PC-9 (cell line): ENCODE measurements at regions of chr1 and their contacts with region 1.

Region 1: GRCh38 chr1:93964777-93965200 is 55.6 kb upstream of the GCLM start:
- DNase-seq: peak; percentile 90 to 100
- H3K4me3 ChIP-seq: peak overlapping the region; percentile 43
- H3K27ac ChIP-seq: peak overlapping the region; percentile 99
- H3K4me1 ChIP-seq: peaks cover 99% of the 10 kb centered on the region
- H3K27me3 ChIP-seq: no peaks in the 10 kb centered on the region
- CTCF ChIP-seq: no peak

Region 2: GRCh38 chr1:93123201-93123783 is 841.5 kb before region 1 on chr1:
- CTCF ChIA-PET with region 1: no interaction called
- POLR2A ChIA-PET with region 1: no interaction called
- intact Hi-C with region 1: no loop called
- DNase-seq: no peak
- H3K4me3 ChIP-seq: no peak overlapping the region
- H3K27ac ChIP-seq: no peak overlapping the region
- H3K4me1 ChIP-seq: no peaks in the 10 kb centered on the region
- H3K27me3 ChIP-seq: no peaks in the 10 kb centered on the region
- CTCF ChIP-seq: no peak

Region 3: DNA sequence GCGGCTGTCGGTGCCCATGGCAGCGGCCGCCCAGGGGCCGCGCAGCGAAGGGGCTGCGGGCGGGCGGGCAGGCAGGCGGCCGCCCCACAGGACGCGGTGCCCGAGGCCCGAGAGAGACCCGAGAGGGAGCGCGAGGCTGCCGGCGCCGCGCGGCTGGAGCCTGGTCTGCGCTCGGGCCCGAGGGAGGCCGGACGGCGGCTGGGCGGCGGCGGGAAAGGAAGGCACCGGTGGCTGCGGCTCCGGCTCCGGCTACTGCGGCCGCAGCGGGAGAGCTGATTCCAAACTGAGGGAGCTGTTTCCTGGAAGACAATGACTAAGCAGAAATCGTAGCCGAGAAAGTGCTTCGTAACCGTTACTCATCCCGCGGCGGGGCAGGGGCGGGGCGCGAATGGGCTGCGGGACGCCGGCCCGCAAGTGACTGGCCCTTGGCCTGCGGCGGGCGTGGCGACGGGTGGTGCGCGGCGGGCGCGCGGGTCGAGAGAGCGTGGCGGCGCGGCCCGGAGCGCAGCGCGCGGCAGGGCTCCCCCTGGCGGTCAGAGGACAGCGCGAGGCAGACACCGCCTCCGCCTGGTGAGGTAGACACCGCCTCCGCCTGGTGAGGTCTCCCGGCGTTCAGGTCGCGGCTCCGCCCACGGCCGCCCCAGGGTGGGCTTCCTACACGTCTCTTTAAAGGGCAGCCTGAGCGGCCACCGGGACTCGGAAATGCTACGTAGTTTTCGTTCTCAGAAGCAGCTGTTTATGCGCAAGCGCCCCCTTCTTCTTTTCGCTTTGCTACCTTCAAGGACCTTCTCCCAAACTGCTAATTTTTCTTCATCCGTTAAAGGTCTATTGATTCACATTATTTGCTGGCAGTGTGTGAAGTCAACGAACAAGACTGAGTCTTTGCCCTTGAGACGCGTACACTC is 55.4 kb before region 1 on chr1 and contains the start of gene GCLM:
- CTCF ChIA-PET with region 1: interaction called, 4 read pairs
- POLR2A ChIA-PET with region 1: interaction called, 16 read pairs
- intact Hi-C with region 1: loop called (anchors 1 kb)
- DNase-seq: peak; percentile 94 to 97
- H3K4me3 ChIP-seq: peak within 1 kb of the TSS; percentile 68
- H3K27ac ChIP-seq: peak within 1 kb of the TSS; percentile 80
- H3K4me1 ChIP-seq: peaks cover 32% of the 10 kb centered on the region
- H3K27me3 ChIP-seq: no peaks in the 10 kb centered on the region
- CTCF ChIP-seq: peak; percentile 80
- total RNA-seq, gene GCLM: 270 and 272 TPM in 2 replicates

Region 4: DNA sequence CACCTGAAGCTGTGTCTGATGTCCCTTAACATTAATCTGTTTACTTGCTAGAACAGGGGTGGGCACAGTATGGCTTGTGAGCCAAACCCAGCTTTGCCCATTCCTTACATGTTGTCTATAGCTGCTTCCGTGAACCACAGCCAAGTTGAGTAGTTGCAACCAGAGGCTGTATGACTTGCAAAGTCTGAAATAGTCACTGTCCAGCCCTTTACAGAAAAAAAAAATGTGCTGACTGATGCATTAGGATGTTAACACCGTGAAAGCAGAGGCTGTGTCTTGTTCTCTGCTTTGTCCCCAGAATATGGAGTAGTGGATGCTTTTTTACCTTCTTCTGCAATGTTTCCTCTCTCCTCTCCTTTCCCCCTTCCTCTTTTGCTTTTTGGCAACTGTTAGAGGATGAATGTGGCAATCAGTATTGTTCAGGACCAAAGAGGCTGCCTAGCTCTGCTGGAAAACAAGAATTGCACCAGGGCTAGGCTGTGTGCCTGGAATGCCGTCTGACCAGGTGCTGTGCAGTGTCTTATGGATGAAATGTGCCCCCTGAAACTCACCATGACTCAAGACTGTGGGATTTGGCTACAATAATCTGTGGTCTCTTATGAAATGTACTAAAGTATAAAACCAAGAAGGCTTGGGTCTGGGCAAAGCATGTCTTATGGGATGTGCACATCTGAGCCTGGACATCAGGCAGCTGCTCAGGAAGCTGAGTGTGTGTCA is 24.0 kb after region 1 on chr1:
- CTCF ChIA-PET with region 1: interaction called, 11 read pairs
- POLR2A ChIA-PET with region 1: interaction called, 14 read pairs
- intact Hi-C with region 1: loop called (anchors 1 kb)
- DNase-seq: peak; percentile 84 to 100
- H3K4me3 ChIP-seq: peak overlapping the region; percentile 25; the same call in 1 of the 2 replicates
- H3K27ac ChIP-seq: peak overlapping the region; percentile 95
- H3K4me1 ChIP-seq: peaks cover 61% of the 10 kb centered on the region
- H3K27me3 ChIP-seq: no peaks in the 10 kb centered on the region
- CTCF ChIP-seq: no peak

Region 5: GRCh38 chr1:94045465-94046056 is 80.8 kb after region 1 on chr1:
- CTCF ChIA-PET with region 1: interaction called, 4 read pairs
- POLR2A ChIA-PET with region 1: interaction called, 15 read pairs
- intact Hi-C with region 1: no loop called
- DNase-seq: peak; percentile 92 to 97
- H3K4me3 ChIP-seq: no peak overlapping the region
- H3K27ac ChIP-seq: peak overlapping the region; percentile 28
- H3K4me1 ChIP-seq: peaks cover 30% of the 10 kb centered on the region
- H3K27me3 ChIP-seq: no peaks in the 10 kb centered on the region
- CTCF ChIP-seq: peak; percentile 90

Region 6: DNA sequence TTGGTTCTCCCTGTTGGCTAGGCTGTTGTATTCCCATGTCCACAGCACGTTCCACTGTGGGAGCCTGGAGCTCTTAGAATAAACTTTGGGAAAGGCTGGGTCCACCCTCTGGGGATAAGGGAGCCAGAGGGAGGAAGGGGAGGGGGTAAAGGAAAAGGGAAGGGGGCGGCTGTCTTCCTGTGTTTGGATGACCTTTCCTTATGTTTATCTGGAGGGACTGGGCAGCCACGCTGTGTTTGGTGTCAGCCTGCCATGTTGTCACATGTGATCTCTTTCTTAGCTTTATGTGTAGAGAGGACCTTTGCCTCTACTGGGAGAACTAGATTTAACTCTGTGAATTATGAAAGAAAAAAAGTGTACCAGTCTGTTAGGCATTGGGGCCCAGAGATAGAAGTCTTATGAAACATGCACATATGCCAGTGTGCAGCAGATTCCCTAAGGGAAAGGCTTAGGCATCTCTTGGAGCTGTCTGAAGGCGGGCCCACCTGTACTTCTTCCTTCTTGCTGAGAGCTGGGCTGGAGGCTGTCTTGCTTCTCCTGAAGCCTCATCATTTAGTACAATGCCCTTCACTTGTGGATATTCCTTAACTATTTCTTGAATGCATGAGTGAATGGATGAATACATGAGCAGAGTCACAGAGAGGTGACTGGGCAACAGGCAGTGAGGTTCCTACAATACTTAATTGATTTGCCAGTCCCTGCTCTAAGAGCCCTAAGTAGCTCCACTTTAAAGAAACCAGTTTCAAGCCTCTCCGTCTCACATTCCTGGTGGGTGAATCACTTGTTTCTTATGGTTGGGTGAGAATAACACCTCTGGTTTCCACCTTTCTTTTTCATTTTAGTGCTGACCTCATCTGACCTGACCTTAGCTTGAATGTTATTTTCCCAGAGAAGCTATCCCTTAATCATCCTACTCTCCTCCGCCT is 335.1 kb after region 1 on chr1:
- CTCF ChIA-PET with region 1: no interaction called
- POLR2A ChIA-PET with region 1: interaction called, 10 read pairs
- intact Hi-C with region 1: no loop called
- DNase-seq: peak; percentile 71 to 100
- H3K4me3 ChIP-seq: peak overlapping the region; percentile 3; the same call in 1 of the 2 replicates
- H3K27ac ChIP-seq: peak overlapping the region; percentile 97
- H3K4me1 ChIP-seq: peaks cover 55% of the 10 kb centered on the region
- H3K27me3 ChIP-seq: no peaks in the 10 kb centered on the region
- CTCF ChIP-seq: no peak

Region 7: DNA sequence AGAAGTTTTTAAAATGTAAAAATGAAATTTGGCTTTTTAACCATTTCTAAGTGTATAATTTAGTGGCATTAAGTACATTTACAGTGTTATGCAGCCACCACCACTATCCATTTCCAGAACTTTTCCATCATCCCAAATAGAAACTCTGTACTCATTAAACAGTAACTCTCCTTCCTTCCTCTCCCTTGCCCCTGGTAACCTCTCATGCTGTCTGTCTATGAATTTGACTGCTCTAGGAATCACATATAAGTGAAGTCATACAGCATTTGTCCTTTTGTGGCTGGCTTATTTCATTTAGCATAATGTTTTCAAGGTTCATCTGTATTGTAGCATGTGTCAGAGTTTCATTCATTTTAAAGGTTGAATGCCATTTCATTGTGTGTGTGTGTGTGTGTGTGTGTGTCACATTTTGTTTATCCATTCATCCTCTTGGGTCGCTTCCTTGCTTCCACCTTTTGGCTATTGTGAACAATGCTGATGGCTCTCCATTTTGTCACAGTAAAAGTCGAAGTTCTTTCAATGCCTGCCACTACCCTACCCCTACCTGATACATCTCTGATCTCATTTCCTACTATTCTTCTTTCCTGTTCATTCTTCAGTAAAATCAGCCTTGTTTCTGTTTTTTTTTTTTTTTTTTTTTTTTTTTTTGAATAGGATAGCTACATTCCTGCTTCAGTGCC is 531.4 kb after region 1 on chr1:
- CTCF ChIA-PET with region 1: no interaction called
- POLR2A ChIA-PET with region 1: interaction called, 16 read pairs
- intact Hi-C with region 1: no loop called
- DNase-seq: no peak
- H3K4me3 ChIP-seq: no peak overlapping the region
- H3K27ac ChIP-seq: no peak overlapping the region
- H3K4me1 ChIP-seq: no peaks in the 10 kb centered on the region
- H3K27me3 ChIP-seq: no peaks in the 10 kb centered on the region
- CTCF ChIP-seq: no peak

Region 8: GRCh38 chr1:95072532-95073419 is 1108.0 kb after region 1 on chr1 and contains the start of gene ALG14:
- CTCF ChIA-PET with region 1: no interaction called
- POLR2A ChIA-PET with region 1: no interaction called
- intact Hi-C with region 1: loop called (anchors 5 kb)
- DNase-seq: peak; percentile 89 to 90
- H3K4me3 ChIP-seq: peak within 1 kb of the TSS; percentile 68
- H3K27ac ChIP-seq: peak within 1 kb of the TSS; percentile 38
- H3K4me1 ChIP-seq: peaks cover 6% of the 10 kb centered on the region
- H3K27me3 ChIP-seq: no peaks in the 10 kb centered on the region
- CTCF ChIP-seq: no peak
- total RNA-seq, gene ALG14: 7.7 and 8.6 TPM in 2 replicates

Region 9: DNA sequence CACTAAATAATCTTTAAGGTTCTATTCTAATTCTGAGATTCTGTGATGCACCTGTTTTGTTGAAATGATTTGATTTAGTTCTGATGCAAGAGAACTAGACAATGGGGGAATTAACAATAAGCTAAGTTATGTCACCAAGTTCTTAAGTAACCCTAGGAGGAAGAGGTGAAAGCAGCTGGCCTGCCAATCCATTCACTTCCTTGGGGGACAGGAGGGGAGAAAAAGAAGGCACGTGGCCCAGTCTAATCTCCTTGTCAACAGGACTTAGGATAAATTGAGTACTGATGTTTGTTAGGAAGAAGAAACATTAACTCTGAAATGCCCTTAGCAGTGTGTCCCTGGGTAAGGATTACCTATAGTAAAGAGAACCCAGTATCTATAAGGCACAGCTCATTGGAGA is 1189.3 kb after region 1 on chr1:
- CTCF ChIA-PET with region 1: no interaction called
- POLR2A ChIA-PET with region 1: no interaction called
- intact Hi-C with region 1: no loop called
- DNase-seq: no peak
- H3K4me3 ChIP-seq: no peak overlapping the region
- H3K27ac ChIP-seq: no peak overlapping the region
- H3K4me1 ChIP-seq: no peaks in the 10 kb centered on the region
- H3K27me3 ChIP-seq: no peaks in the 10 kb centered on the region
- CTCF ChIP-seq: no peak